ENCODE measurements at regions of chr5 and their contacts with region 1.

Region 1: GRCh38 chr5:154189819-154190594 is 526 bp upstream of the GALNT10 start:
- DNase-seq: peak; percentile 77
- H3K4me3 Mint-ChIP-seq: peak overlapping the region; percentile 87
- H3K27ac Mint-ChIP-seq: peak overlapping the region; percentile 85
- H3K4me1 Mint-ChIP-seq: peaks cover 54% of the 10 kb centered on the region
- H3K27me3 Mint-ChIP-seq: peaks cover 3% of the 10 kb centered on the region

Region 2: GRCh38 chr5:154176181-154176580 is 13.8 kb before region 1 on chr5:
- intact Hi-C with region 1: no loop called
- DNase-seq: no peak
- H3K4me3 Mint-ChIP-seq: no peak overlapping the region
- H3K27ac Mint-ChIP-seq: no peak overlapping the region
- H3K4me1 Mint-ChIP-seq: peaks cover 29% of the 10 kb centered on the region
- H3K27me3 Mint-ChIP-seq: peaks cover 8% of the 10 kb centered on the region

Region 3: GRCh38 chr5:154202379-154203260 is 12.6 kb after region 1 on chr5:
- intact Hi-C with region 1: loop called (anchors 1 kb)
- DNase-seq: peak; percentile 53
- H3K4me3 Mint-ChIP-seq: peak overlapping the region; percentile 67
- H3K27ac Mint-ChIP-seq: peak overlapping the region; percentile 85
- H3K4me1 Mint-ChIP-seq: peaks cover 94% of the 10 kb centered on the region
- H3K27me3 Mint-ChIP-seq: no peaks in the 10 kb centered on the region

Region 4: GRCh38 chr5:154221371-154221896 is 31.4 kb after region 1 on chr5:
- intact Hi-C with region 1: loop called (anchors 1 kb)
- DNase-seq: peak; percentile 63
- H3K4me3 Mint-ChIP-seq: peak overlapping the region; percentile 59
- H3K27ac Mint-ChIP-seq: peak overlapping the region; percentile 95
- H3K4me1 Mint-ChIP-seq: peaks cover 66% of the 10 kb centered on the region
- H3K27me3 Mint-ChIP-seq: no peaks in the 10 kb centered on the region

Region 5: DNA sequence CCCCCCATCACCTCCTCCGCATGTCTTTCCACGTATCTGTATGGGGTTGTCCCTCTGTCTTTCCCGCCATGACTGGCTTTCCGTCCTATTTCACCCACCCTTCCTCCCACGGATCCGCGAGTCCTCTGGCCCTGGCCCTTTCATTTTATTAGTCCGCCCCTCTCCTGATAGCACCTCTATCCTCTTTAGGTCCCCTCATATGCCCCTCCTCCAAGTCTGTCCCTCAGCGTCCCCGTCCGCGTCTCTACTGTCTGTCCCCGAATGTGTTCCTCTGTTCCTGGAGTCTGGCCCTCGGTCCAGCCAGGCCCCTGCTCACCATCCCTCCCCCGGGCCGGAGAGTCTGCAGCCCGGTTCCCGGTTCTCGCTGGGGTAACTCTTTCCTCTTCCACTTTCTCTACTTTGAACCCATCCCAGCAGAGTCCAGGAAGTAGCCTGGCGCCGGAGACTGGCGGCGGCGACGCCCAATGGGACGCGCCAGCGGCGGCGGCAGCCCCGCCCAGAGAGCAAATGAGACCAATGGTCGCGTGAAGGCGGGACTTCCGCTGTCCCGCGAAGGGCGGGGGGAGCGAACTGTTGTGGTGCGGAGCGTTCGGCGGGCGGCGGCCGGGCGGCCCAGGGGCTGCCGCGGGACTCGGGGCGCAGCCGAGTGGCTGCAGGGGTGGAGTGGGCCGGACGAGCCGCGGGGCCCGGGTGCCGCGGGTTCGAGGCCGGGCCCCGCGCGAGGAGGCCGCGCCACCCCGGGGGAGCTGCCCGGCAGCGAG is 255.6 kb after region 1 on chr5 and contains the start of gene SAP30L:
- intact Hi-C with region 1: loop called (anchors 2 kb)
- DNase-seq: peak; percentile 96
- H3K4me3 Mint-ChIP-seq: peak within 1 kb of the TSS; percentile 99
- H3K27ac Mint-ChIP-seq: peak within 1 kb of the TSS; percentile 95
- H3K4me1 Mint-ChIP-seq: peaks cover 65% of the 10 kb centered on the region
- H3K27me3 Mint-ChIP-seq: no peaks in the 10 kb centered on the region
- total RNA-seq, gene SAP30L: 37.5 and 44.4 TPM in 2 replicates